Sigmoid colon (tissue), 7 donors: ENCODE measurements at regions of chr7 and their contacts with region 1.

Region 1: DNA sequence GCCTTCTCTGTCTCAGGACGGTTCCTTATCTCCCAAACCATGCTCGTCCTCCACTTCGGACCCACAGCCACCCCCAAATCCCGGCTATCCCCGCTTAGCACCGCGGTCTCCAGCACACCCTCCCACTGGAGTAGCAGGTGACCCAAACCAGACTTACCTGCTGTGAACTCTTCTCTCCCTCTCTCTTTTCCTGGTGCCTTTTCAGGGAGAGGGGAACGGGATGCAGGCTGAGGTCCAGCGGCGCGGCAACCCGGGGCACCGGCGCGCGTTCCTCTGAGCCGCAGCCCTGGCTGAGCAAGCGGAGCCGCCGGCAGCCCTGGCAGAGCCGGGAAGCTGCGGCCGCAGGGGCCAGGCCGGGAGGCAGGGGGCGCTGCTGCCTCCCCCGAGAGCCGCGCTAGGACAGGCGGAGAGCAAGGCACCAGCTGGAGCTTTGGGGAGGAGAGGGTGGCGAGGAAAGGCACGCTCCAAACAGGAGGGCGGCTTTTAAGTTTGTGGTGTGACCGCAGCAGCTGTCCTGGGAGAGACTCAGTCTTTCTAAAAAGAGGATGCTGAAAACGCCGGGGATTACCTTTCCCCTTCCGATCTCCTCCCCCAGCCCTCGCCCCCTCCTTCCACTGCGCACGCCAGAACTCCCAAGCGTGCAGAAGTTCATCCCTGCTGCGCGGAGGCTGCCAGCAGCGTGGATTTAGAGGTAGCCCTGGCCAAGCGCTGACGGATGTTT is at the start of gene SEMA3D:
- DNase-seq: peak; percentile 79
- H3K4me3 ChIP-seq: peak within 1 kb of the TSS; percentile 37 to 58 (median 54)
- H3K27ac ChIP-seq: peak within 1 kb of the TSS; percentile 40 to 62 (median 55)
- H3K4me1 ChIP-seq: peaks cover 0 to 22% (median 20%) of the 10 kb centered on the region in 4 donors
- H3K27me3 ChIP-seq: no peaks in the 10 kb centered on the region
- CTCF ChIP-seq: peak in 3 of 4 experiments; percentile 16 to 78 (median 60)
- EP300 ChIP-seq: no peak
- POLR2A ChIP-seq: no peak
- total RNA-seq, gene SEMA3D: 2.5 to 5.5 (median 3.7) TPM

Region 2: DNA sequence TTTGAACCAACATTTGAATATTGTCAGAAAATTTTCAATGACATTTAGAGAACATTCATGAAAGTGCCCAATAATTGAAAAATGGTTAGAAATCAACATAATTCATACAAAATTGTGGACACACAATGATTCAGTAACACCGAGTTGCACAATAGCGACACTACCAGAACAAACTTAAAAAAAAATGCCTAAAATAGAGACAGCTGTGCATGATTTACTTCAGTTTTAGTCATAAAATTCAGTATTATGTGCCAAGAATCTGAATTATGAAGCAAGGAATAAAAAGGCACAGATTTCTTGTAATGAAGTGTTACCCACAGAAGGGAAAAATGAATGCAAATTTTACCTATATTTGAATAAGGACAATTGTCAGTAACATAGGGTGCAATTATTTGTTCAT is 395.8 kb before region 1 on chr7:
- intact Hi-C with region 1: no loop called
- DNase-seq: no peak
- H3K4me3 ChIP-seq: no peak overlapping the region
- H3K27ac ChIP-seq: no peak overlapping the region
- H3K4me1 ChIP-seq: peaks cover 0 to 9% (median 5%) of the 10 kb centered on the region in 4 donors
- H3K27me3 ChIP-seq: no peaks in the 10 kb centered on the region
- CTCF ChIP-seq: no peak
- EP300 ChIP-seq: no peak
- POLR2A ChIP-seq: no peak

Region 3: GRCh38 chr7:85004402-85004801 is 182.3 kb before region 1 on chr7:
- intact Hi-C with region 1: no loop called
- DNase-seq: peak; percentile 62
- H3K4me3 ChIP-seq: no peak overlapping the region
- H3K27ac ChIP-seq: peak overlapping the region in 3 of 4 donors; percentile 62 to 70 (median 63)
- H3K4me1 ChIP-seq: peaks cover 0 to 41% (median 23%) of the 10 kb centered on the region in 4 donors
- H3K27me3 ChIP-seq: no peaks in the 10 kb centered on the region
- CTCF ChIP-seq: no peak
- EP300 ChIP-seq: peak in 2 of 4 donors; percentile 26 to 35
- POLR2A ChIP-seq: no peak

Region 4: DNA sequence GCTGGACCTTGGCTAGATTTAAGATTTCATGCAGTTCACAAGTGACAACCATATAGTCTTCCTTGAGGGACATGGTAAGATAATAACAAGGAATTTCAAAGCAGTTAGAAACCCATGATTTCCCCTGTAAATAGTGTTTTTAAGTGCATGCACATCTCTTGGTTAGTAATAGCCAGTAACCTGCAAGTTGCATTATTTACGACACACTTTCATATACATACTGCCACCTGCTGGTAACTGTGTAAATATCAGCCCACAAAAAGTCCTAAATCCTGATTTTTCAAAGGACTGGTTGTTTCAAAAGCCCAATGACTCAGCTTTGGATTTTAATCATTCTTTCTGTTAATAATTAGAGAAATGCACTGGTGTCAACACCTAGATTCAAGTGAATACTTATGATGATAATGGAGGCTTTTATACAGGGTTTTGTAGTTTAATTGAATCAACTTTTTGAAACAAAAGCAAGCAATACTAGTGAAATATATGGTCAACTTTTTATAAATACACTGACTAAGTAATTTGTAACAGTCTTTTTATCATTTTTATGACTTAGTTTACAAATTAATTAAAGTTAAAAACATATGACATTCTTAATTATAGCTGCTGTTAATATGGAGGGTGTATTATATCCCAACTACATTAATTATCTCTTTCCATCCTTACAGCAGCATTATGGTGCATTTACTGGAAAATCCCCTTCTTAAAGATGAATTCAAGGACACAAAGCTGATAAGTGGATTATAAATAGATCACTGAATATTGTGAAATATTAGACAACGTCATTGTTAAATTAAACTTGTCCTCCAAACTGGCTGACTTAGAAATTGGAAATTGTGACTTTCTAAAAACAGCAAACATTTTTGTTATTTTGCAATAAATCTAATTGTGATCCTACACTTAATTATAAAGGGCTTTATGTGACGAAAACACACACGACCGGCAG is 367.8 kb after region 1 on chr7:
- intact Hi-C with region 1: loop called (anchors 2 kb)
- DNase-seq: no peak
- H3K4me3 ChIP-seq: no peak overlapping the region
- H3K27ac ChIP-seq: no peak overlapping the region
- H3K4me1 ChIP-seq: no peaks in the 10 kb centered on the region
- H3K27me3 ChIP-seq: no peaks in the 10 kb centered on the region
- CTCF ChIP-seq: peak; percentile 28 to 61 (median 48)
- EP300 ChIP-seq: no peak
- POLR2A ChIP-seq: no peak